PC-3 (cell line): ENCODE measurements at regions of chrX and their contacts with region 1.

Region 1: DNA sequence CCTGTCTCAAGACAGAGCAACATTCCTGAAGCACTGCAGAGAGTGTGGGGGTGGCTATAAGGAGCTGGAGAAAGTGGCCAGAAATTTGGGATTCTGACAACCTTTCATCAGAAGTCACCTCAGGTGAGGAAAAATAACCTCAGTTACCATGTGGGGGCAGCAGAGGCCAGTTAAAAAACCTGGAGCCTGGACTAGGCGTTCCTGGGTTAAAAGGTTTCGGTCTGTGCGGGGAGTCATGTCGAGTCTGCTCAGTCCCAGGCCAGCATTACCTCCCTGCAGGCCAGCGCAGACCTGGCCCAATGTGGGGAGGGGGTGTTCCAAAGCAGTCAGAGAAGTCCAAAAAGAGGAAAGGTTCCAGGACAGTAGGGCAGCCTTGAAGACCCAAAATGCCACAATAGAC is 10.9 kb upstream of the NALF2 start:
- DNase-seq: peak; percentile 53
- ATAC-seq: peak; percentile 54; the same call in 1 of the 2 replicates
- H3K4me3 ChIP-seq: no peak overlapping the region
- H3K27ac ChIP-seq: no peak overlapping the region
- H3K4me1 ChIP-seq: no peaks in the 10 kb centered on the region
- H3K27me3 ChIP-seq: no peaks in the 10 kb centered on the region
- CTCF ChIP-seq: peak; percentile 59

Region 2: GRCh38 chrX:68828740-68829552 is 664.2 kb before region 1 on chrX and contains the start of gene EFNB1:
- CTCF ChIA-PET with region 1: no interaction called
- POLR2A ChIA-PET with region 1: no interaction called
- intact Hi-C with region 1: no loop called
- DNase-seq: peak; percentile 96
- ATAC-seq: peak; percentile 65
- H3K4me3 ChIP-seq: peak within 1 kb of the TSS; percentile 93
- H3K27ac ChIP-seq: peak within 1 kb of the TSS; percentile 87
- H3K4me1 ChIP-seq: peaks cover 32% of the 10 kb centered on the region
- H3K27me3 ChIP-seq: no peaks in the 10 kb centered on the region
- CTCF ChIP-seq: no peak
- total RNA-seq, gene EFNB1: 102 and 142 TPM in 2 replicates

Region 3: DNA sequence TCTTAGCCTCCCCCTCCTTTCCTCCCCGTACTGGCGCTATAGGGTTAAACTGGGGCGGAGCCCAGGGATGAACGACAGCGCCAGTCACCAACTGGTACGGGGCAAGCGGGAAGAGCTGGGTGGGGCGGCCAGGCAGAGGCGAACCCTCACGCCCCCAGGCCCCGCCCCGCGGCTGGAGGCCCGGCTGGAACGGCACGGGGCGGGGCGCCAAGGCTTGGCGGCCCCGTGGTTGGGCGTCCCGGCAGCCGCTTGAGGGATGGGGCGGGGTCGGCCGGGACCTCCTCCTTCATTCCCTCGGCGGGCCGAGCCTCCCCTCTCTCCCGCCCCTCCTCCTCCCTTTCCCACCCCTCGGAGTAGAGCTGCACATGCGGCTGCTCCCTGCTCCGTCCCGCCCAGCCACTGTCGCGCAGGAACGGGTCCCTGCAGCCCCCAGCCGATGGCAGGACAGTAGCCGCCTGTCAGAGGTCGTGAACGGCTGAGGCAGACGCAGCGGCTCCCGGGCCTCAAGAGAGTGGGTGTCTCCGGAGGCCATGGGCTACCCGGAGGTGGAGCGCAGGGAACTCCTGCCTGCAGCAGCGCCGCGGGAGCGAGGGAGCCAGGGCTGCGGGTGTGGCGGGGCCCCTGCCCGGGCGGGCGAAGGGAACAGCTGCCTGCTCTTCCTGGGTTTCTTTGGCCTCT is 122.7 kb after region 1 on chrX and contains the start of gene EDA:
- CTCF ChIA-PET with region 1: no interaction called
- POLR2A ChIA-PET with region 1: no interaction called
- intact Hi-C with region 1: loop called (anchors 1 kb)
- DNase-seq: peak; percentile 77
- ATAC-seq: peak; percentile 87
- H3K4me3 ChIP-seq: peak within 1 kb of the TSS; percentile 62
- H3K27ac ChIP-seq: no peak within 1 kb of the TSS
- H3K4me1 ChIP-seq: peaks cover 6% of the 10 kb centered on the region; the same call in 1 of the 2 replicates
- H3K27me3 ChIP-seq: peaks cover 28% of the 10 kb centered on the region
- CTCF ChIP-seq: no peak
- total RNA-seq, gene EDA: 0.15 and 1.0 TPM in 2 replicates

Region 4: GRCh38 chrX:70030301-70030767 is 537.1 kb after region 1 on chrX:
- CTCF ChIA-PET with region 1: no interaction called
- POLR2A ChIA-PET with region 1: no interaction called
- intact Hi-C with region 1: loop called (anchors 1 kb)
- DNase-seq: peak; percentile 69
- ATAC-seq: peak; percentile 50
- H3K4me3 ChIP-seq: no peak overlapping the region
- H3K27ac ChIP-seq: no peak overlapping the region
- H3K4me1 ChIP-seq: no peaks in the 10 kb centered on the region
- H3K27me3 ChIP-seq: no peaks in the 10 kb centered on the region
- CTCF ChIP-seq: peak; percentile 82

Region 5: GRCh38 chrX:70096052-70096451 is 602.9 kb after region 1 on chrX:
- CTCF ChIA-PET with region 1: no interaction called
- POLR2A ChIA-PET with region 1: no interaction called
- intact Hi-C with region 1: loop called (anchors 1 kb)
- DNase-seq: peak; percentile 56
- ATAC-seq: peak; percentile 89
- H3K4me3 ChIP-seq: no peak overlapping the region
- H3K27ac ChIP-seq: no peak overlapping the region
- H3K4me1 ChIP-seq: no peaks in the 10 kb centered on the region
- H3K27me3 ChIP-seq: no peaks in the 10 kb centered on the region
- CTCF ChIP-seq: peak; percentile 74